HEK293 (cell line): ENCODE measurements at regions of chr11 and their contacts with region 1.

Region 1: DNA sequence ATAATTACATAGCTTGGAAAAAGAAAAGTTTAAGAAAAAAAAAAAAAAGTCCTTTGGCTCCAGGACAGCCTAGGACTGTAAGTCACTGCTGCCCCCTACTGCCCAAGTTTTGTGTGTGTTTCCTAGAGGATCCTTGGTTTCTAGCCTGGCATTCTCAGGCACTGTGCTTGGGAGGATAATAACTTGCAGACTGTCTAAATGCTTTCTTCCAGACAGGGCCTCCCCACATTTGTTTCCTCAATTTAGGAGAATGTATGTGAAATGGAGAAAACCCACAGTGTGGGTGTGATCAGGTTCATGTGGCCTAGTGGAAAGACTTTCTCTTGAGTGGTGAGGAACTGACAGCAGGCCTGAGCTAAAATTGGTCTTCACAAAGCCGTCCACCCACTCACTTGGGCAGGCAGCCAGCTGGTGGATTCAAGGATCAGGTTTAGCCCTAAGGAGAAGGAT is 191.0 kb downstream of the NAV2 start:
- H3K4me3 ChIP-seq: no peak overlapping the region
- H3K27ac ChIP-seq: no peak overlapping the region
- H3K4me1 ChIP-seq: no peaks in the 10 kb centered on the region
- CTCF ChIP-seq: peak; percentile 56; the same call in 1 of the 2 replicates

Region 2: GRCh38 chr11:19566583-19567379 is 336.9 kb before region 1 on chr11:
- CTCF ChIA-PET with region 1: interaction called, 71 read pairs
- POLR2A ChIA-PET with region 1: interaction called, 6 read pairs
- H3K4me3 ChIP-seq: no peak overlapping the region
- H3K27ac ChIP-seq: no peak overlapping the region
- H3K4me1 ChIP-seq: no peaks in the 10 kb centered on the region
- CTCF ChIP-seq: no peak

Region 3: DNA sequence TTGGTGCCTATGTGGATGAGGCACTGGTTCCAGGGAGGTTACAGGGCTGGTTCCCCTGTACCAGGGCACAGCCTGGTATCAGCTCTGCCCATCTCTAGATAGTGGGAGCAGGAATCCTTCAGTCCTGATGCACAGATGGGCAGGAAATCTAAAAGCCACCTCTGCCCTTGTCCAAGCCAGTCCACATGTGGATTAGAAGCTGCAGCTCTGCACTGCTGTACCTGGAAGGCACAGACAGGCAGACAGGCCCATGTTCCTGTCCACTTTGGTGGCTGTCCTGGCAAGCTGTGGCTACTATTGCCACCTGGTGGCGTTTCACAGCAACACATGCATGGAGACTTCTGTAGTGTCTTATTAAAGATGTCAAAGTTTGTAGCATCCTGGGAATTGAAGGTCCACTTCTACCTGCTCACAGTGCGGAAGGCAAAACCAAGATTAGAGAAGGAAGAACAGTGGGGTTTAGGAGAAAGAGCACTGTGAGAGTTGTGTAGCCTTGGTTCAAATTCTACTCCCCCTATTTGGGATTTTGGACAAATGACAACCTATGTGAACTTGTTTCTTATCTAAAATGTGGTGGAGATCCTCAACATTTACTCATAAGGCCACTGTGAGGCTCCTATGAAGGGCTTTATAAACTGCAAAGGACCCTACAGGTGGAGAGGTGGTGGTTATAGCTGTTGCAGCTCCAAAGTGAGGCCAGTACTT is 160.9 kb before region 1 on chr11:
- CTCF ChIA-PET with region 1: interaction called, 24 read pairs
- POLR2A ChIA-PET with region 1: no interaction called
- H3K4me3 ChIP-seq: no peak overlapping the region
- H3K27ac ChIP-seq: no peak overlapping the region
- H3K4me1 ChIP-seq: no peaks in the 10 kb centered on the region
- CTCF ChIP-seq: peak; percentile 58; the same call in 1 of the 2 replicates

Region 4: GRCh38 chr11:19814421-19814820 is 89.2 kb before region 1 on chr11:
- CTCF ChIA-PET with region 1: interaction called, 17 read pairs
- POLR2A ChIA-PET with region 1: no interaction called
- H3K4me3 ChIP-seq: no peak overlapping the region
- H3K27ac ChIP-seq: no peak overlapping the region
- H3K4me1 ChIP-seq: no peaks in the 10 kb centered on the region; the same call in 1 of the 2 replicates
- CTCF ChIP-seq: no peak

Region 5: DNA sequence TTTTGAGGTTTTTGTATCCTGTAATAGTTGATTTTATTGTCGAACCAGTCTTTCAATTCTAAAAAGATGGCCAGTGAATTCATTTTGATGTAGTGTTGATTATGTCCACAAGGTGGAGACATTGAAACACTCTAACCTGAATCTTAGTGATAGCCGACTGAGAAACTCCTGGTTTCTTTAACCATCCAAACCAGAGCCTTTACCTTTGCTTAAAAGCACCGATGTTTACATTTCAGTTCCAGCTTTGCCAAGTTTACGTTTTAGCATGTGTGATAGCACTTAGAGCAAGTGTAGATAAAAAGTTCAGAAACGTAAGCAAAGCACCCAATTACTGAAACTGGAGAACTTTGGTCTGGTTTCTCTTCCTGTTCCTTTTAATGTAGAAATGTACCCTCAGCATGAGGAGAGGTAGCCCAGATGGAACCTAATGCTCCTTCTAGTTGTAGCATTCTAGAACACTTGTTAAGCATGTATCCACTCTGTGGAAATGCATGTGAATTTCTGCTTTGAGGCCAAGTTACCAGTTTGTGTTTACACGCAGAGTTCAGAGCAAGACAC is 48.0 kb after region 1 on chr11:
- CTCF ChIA-PET with region 1: interaction called, 15 read pairs
- POLR2A ChIA-PET with region 1: no interaction called
- H3K4me3 ChIP-seq: no peak overlapping the region
- H3K27ac ChIP-seq: peak overlapping the region; percentile 48
- H3K4me1 ChIP-seq: peaks cover 12% of the 10 kb centered on the region
- CTCF ChIP-seq: no peak

Region 6: DNA sequence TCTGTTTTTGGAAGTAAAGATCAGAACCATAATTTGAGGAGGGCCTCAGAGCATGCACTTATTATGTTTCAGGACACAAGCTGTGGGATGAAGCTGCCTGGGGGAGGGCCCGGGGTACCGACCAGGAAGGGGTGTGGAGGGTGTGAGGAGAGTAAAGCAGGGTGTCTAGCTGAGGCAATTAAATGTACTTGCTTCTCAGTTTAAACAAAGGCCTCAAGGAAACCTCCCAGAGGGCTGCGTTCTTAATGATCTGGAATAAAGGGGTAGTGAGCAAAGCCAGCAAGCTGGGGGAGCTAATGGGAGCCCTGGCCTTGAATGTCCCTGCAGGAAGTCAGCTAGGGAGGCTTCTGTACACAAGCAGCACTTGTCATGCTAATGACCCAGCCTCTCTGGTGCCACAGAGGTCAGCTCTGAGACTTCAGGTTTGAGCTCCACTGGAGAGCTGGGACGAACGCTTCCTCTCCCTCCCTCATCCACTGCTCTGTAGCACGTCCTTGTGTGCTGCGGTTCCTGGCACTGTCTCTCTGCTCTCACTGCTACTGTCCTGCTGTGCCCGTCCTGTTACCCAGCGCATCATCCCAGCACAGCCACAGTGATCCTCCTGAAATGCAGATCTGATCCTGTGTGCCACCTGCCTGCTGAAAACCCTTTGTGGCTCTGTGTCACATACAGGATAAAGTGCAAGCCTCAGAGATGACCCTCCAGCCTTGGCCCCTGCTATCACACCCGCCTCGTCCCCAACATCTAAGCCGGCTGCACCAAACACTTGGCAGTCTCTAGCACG is 96.9 kb after region 1 on chr11:
- CTCF ChIA-PET with region 1: no interaction called
- POLR2A ChIA-PET with region 1: no interaction called
- H3K4me3 ChIP-seq: no peak overlapping the region
- H3K27ac ChIP-seq: peak overlapping the region; percentile 25
- H3K4me1 ChIP-seq: peaks cover 8% of the 10 kb centered on the region; the same call in 1 of the 2 replicates
- CTCF ChIP-seq: no peak

Region 7: DNA sequence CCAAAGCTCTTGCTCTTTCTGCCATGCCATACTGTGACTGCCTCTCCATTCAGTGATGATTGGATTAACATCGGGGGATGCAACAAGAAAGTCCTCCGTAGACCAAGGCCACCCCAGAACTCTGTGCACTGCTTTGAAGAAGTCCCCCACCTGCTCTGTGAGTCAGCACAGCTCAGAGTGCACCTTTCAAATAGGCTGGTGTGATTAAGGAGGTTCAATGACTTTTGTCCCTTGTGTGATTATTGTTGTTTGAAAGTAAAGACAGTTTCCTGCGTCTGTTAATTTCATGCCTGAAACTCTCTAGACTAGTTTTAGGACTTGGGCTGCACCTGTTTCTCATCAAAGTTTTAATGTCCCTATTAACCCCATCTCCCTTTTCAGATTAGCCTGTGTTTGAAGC is 289.7 kb after region 1 on chr11:
- CTCF ChIA-PET with region 1: no interaction called
- POLR2A ChIA-PET with region 1: no interaction called
- H3K4me3 ChIP-seq: no peak overlapping the region
- H3K27ac ChIP-seq: no peak overlapping the region
- H3K4me1 ChIP-seq: no peaks in the 10 kb centered on the region
- CTCF ChIP-seq: no peak

Region 8: GRCh38 chr11:20355221-20356219 is 451.9 kb after region 1 on chr11:
- CTCF ChIA-PET with region 1: interaction called, 12 read pairs
- POLR2A ChIA-PET with region 1: no interaction called
- H3K4me3 ChIP-seq: no peak overlapping the region
- H3K27ac ChIP-seq: no peak overlapping the region
- H3K4me1 ChIP-seq: no peaks in the 10 kb centered on the region
- CTCF ChIP-seq: no peak